Dorsolateral prefrontal cortex (tissue), 120 donors: ENCODE measurements at regions of chr20 and their contacts with region 1.

Region 1: DNA sequence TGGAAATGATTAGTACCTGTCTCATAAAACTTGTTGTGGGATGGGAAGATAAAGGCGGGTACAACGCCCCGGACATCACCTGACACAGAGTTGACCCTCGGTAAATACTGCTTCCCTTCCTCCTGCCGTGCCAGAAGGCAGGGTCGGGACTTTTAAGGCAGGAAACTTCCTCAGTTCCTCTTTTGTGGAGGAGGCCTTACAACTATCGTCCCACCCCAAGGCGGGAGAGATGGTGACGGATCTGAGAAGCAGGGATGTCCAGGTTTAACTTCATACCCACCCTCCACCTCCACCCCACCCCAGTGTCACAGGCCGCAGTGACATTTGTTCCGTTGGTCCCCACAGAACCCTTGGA is 555 bp downstream of the DNTTIP1 start:
- DNase-seq: peak in 1 of 10 donors; percentile 4
- H3K4me3 ChIP-seq: peak overlapping the region; percentile 77 to 100 (median 96)
- H3K27ac ChIP-seq: peak overlapping the region in 53 of 59 donors; percentile 33 to 95 (median 86)
- H3K27me3 ChIP-seq: no peaks in the 10 kb centered on the region
- CTCF ChIP-seq: no peak

Region 2: GRCh38 chr20:45402946-45403345 is 389.4 kb before region 1 on chr20:
- intact Hi-C with region 1: no loop called
- DNase-seq: no peak
- H3K4me3 ChIP-seq: no peak overlapping the region
- H3K27ac ChIP-seq: peak overlapping the region in 12 of 59 donors; percentile 2 to 100 (median 35)
- H3K27me3 ChIP-seq: no peaks in the 10 kb centered on the region
- CTCF ChIP-seq: no peak

Region 3: GRCh38 chr20:45971675-45972499 is 179.6 kb after region 1 on chr20 and contains the start of gene ZNF335:
- intact Hi-C with region 1: loop called in 1 of 2 experiments (anchors 5 kb)
- DNase-seq: peak; percentile 88 to 97 (median 94)
- H3K4me3 ChIP-seq: peak within 1 kb of the TSS; percentile 63 to 100 (median 90)
- H3K27ac ChIP-seq: peak within 1 kb of the TSS; percentile 97 to 100 (median 100)
- H3K27me3 ChIP-seq: no peaks in the 10 kb centered on the region
- CTCF ChIP-seq: peak in 53 of 56 donors; percentile 15 to 73 (median 54)
- total RNA-seq, gene ZNF335: 20.9 to 40.0 (median 26.7) TPM